ENCODE measurements at regions of chr11 and their contacts with region 1.

Region 1: GRCh38 chr11:82900277-82901164 is at the start of gene PRCP:
- DNase-seq: peak; percentile 76 to 96 (median 94)
- ATAC-seq: peak; percentile 78 to 80 (median 79)
- H3K4me3 ChIP-seq: peak within 1 kb of the TSS; percentile 89 to 92
- H3K4me3 Mint-ChIP-seq: peak within 1 kb of the TSS; percentile 88 to 99 (median 97)
- H3K27ac ChIP-seq: peak within 1 kb of the TSS; percentile 98
- H3K27ac Mint-ChIP-seq: peak within 1 kb of the TSS; percentile 98
- H3K4me1 ChIP-seq: peaks cover 13 to 34% of the 10 kb centered on the region in 2 experiments
- H3K4me1 Mint-ChIP-seq: peaks cover 42 to 50% (median 44%) of the 10 kb centered on the region in 3 donors
- H3K27me3 ChIP-seq: no peaks in the 10 kb centered on the region
- H3K27me3 Mint-ChIP-seq: no peaks in the 10 kb centered on the region
- total RNA-seq, gene PRCP: 18.1 to 22.7 (median 20.2) TPM

Region 2: DNA sequence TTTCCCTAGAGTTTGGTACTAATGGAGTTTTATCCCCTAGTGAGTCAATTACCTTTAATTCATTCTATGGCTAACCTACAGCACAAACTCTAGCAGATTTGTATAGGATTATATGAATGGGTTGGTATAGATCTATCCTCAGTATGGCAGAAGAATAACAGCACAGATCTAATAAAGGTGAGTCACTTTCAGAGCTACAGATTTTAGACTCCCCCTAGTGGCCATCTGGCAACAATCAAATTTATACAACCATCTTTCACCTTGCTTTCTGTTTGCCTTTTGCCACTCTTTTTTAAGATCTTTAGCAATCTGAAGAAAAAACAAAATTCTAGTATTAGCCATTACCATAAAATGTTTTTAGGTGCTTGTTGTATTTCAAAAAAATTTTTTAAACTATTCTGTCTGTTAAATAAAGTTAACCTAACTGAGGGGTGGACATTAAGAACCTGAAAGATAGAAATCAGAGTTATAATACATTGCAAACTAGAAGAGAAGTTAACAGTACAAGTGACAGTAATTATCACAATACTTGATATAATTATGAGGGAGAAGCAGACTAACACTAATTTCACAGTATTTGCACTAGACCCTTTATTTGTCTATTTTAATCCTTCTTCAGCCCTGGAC is 26.8 kb after region 1 on chr11:
- CTCF ChIA-PET with region 1: interaction called in 1 of 2 experiments, 7 read pairs
- POLR2A ChIA-PET with region 1: interaction called, 5 to 11 read pairs
- DNase-seq: peak in 19 of 35 experiments; percentile 4 to 80 (median 25)
- ATAC-seq: peak; percentile 82 to 91 (median 88)
- H3K4me3 ChIP-seq: no peak overlapping the region
- H3K4me3 Mint-ChIP-seq: peak overlapping the region in 1 of 3 donors; percentile 31
- H3K27ac ChIP-seq: no peak overlapping the region
- H3K27ac Mint-ChIP-seq: peak overlapping the region; percentile 57 to 61
- H3K4me1 ChIP-seq: peaks cover 6 to 17% of the 10 kb centered on the region in 2 experiments
- H3K4me1 Mint-ChIP-seq: peaks cover 36 to 39% (median 37%) of the 10 kb centered on the region in 3 donors
- H3K27me3 ChIP-seq: no peaks in the 10 kb centered on the region
- H3K27me3 Mint-ChIP-seq: no peaks in the 10 kb centered on the region

Region 3: GRCh38 chr11:83156150-83156995 is 255.9 kb after region 1 on chr11:
- CTCF ChIA-PET with region 1: interaction called in 1 of 2 experiments, 11 read pairs
- POLR2A ChIA-PET with region 1: interaction called, 5 to 39 read pairs
- DNase-seq: peak; percentile 90 to 100 (median 97)
- ATAC-seq: peak; percentile 87 to 90 (median 88)
- H3K4me3 ChIP-seq: peak overlapping the region; percentile 98 to 99
- H3K4me3 Mint-ChIP-seq: peak overlapping the region; percentile 96 to 100 (median 99)
- H3K27ac ChIP-seq: peak overlapping the region; percentile 98
- H3K27ac Mint-ChIP-seq: peak overlapping the region; percentile 100
- H3K4me1 ChIP-seq: peaks cover 11 to 21% of the 10 kb centered on the region in 2 experiments
- H3K4me1 Mint-ChIP-seq: peaks cover 25 to 32% (median 25%) of the 10 kb centered on the region in 3 donors
- H3K27me3 ChIP-seq: no peaks in the 10 kb centered on the region
- H3K27me3 Mint-ChIP-seq: no peaks in the 10 kb centered on the region

Region 4: DNA sequence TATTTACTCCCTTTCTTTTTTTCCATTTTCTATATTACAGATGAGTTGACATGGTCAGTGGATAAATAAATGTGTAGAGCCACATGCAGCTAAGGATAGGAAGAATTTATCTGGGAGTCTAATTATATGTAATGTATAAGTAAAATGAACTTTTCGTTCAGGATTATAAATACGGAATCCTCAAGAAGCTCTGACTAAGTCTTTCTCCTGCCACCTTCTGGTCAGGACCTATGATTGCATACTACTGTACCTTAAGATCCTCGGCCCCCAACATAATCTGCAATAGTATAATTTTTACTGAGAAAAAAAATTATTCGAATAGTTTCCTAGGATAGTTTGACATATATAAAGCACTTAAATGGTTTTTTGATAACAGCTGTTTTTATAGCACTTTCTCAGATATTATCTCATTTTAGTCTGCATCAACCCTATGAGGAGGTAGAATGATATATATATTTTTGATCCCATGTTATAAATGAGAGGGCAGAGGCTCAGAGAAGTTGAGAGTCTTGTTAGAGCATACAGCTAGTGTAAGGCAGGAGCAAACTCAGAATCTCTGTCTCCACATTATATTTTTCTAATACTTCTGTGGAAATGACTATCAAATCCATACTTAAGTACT is 349.6 kb after region 1 on chr11:
- CTCF ChIA-PET with region 1: interaction called, 3 to 27 read pairs
- POLR2A ChIA-PET with region 1: no interaction called
- DNase-seq: peak in 10 of 35 experiments; percentile 1 to 68 (median 4)
- ATAC-seq: peak; percentile 50 to 70 (median 70)
- H3K4me3 ChIP-seq: no peak overlapping the region
- H3K4me3 Mint-ChIP-seq: no peak overlapping the region
- H3K27ac ChIP-seq: no peak overlapping the region
- H3K27ac Mint-ChIP-seq: no peak overlapping the region
- H3K4me1 ChIP-seq: no peaks in the 10 kb centered on the region
- H3K4me1 Mint-ChIP-seq: peaks cover 0 to 4% (median 1%) of the 10 kb centered on the region in 3 donors
- H3K27me3 ChIP-seq: no peaks in the 10 kb centered on the region
- H3K27me3 Mint-ChIP-seq: no peaks in the 10 kb centered on the region